ENCODE measurements at regions of chr7 and their contacts with region 1.

Region 1: GRCh38 chr7:98420966-98421612 is 20.2 kb upstream of the BAIAP2L1 start:
- DNase-seq: peak; percentile 87
- H3K4me3 ChIP-seq: peak overlapping the region in 1 of 2 experiments; percentile 45; a peak in 1 of 4 replicates
- H3K27ac ChIP-seq: no peak overlapping the region
- H3K4me1 ChIP-seq: peaks cover 3 to 6% of the 10 kb centered on the region in 2 experiments; a peak in 2 of 4 replicates
- H3K27me3 ChIP-seq: no peaks in the 10 kb centered on the region
- CTCF ChIP-seq: peak; percentile 100
- EP300 ChIP-seq: no peak
- RAD21 ChIP-seq: peak; percentile 81

Region 2: DNA sequence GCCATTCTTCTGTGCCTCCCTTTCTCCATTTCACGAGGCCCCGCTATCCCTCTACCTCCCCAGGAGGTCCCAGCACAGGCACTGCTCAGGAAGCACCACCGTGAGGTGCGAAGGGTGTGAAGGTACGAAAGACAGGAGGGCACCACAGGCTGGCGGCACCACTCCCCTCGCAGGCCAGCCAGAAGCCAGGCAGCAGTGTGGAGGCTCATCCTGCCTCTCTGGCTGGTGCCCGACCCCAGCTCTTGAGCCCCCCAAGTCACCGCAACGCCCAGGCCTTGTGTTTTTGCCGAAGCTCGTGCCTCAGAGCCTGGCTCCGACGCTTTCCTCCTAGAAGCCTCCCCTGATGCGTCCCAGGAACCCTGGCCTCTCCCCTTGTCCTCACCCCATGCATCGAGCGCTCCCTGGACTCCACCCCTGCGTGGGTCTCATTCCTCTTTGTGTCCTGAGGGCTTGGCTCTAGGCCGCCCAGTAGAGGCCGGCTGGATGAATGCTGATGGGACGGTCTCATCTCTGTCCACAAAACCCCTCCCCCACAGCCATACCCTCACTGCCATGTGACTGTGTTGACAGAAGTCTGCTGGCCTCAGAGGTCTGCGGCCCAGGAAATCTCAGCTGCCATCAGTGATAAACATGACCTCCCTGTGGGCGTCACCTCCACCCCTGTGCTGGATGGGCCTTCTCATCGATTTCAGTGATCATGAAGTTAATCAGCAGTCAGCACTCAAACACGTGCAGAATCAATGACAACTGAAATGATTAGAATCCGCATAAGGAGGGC is 120.3 kb before region 1 on chr7:
- CTCF ChIA-PET with region 1: interaction called, 17 read pairs
- POLR2A ChIA-PET with region 1: interaction called, 3 read pairs
- DNase-seq: peak; percentile 51
- H3K4me3 ChIP-seq: no peak overlapping the region
- H3K27ac ChIP-seq: no peak overlapping the region
- H3K4me1 ChIP-seq: peaks cover 0 to 1% of the 10 kb centered on the region in 2 experiments; a peak in 1 of 4 replicates
- H3K27me3 ChIP-seq: no peaks in the 10 kb centered on the region
- CTCF ChIP-seq: no peak
- EP300 ChIP-seq: no peak
- RAD21 ChIP-seq: no peak

Region 3: GRCh38 chr7:98341106-98341505 is 80.0 kb before region 1 on chr7:
- CTCF ChIA-PET with region 1: no interaction called
- POLR2A ChIA-PET with region 1: no interaction called
- DNase-seq: no peak
- H3K4me3 ChIP-seq: no peak overlapping the region
- H3K27ac ChIP-seq: no peak overlapping the region
- H3K4me1 ChIP-seq: peaks cover 0 to 5% of the 10 kb centered on the region in 2 experiments; a peak in 1 of 4 replicates
- H3K27me3 ChIP-seq: no peaks in the 10 kb centered on the region
- CTCF ChIP-seq: no peak
- EP300 ChIP-seq: no peak
- RAD21 ChIP-seq: no peak

Region 4: DNA sequence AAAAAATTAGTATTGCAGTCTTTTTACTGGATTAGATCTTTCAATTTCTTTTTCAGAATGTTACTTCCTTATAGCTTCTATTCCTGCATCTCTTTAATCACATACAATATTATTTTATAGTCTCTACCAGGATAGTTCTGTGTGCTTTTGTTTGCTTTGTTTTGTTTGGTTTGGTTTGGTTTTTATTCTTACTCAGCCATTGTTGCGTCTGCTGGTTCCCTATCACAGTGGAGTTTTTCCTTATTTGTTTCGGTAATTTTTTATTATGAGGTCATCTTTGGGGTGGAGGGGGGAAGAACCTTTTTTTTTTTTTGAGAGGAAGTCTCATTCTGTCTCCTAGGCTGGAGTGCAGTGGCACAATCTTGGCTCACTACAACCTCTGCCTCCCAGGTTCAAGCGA is 11.2 kb before region 1 on chr7:
- CTCF ChIA-PET with region 1: interaction called, 124 read pairs
- POLR2A ChIA-PET with region 1: no interaction called
- DNase-seq: no peak
- H3K4me3 ChIP-seq: no peak overlapping the region
- H3K27ac ChIP-seq: no peak overlapping the region
- H3K4me1 ChIP-seq: no peaks in the 10 kb centered on the region
- H3K27me3 ChIP-seq: no peaks in the 10 kb centered on the region
- CTCF ChIP-seq: no peak
- EP300 ChIP-seq: no peak
- RAD21 ChIP-seq: no peak

Region 5: GRCh38 chr7:98555403-98555802 is 134.3 kb after region 1 on chr7:
- CTCF ChIA-PET with region 1: interaction called, 11 read pairs
- POLR2A ChIA-PET with region 1: no interaction called
- DNase-seq: no peak
- H3K4me3 ChIP-seq: no peak overlapping the region
- H3K27ac ChIP-seq: peak overlapping the region in 1 of 2 experiments; percentile 81; a peak in 2 of 4 replicates
- H3K4me1 ChIP-seq: peaks cover 0 to 37% of the 10 kb centered on the region in 2 experiments; a peak in 1 of 4 replicates
- H3K27me3 ChIP-seq: no peaks in the 10 kb centered on the region
- CTCF ChIP-seq: no peak
- EP300 ChIP-seq: no peak
- RAD21 ChIP-seq: no peak

Region 6: DNA sequence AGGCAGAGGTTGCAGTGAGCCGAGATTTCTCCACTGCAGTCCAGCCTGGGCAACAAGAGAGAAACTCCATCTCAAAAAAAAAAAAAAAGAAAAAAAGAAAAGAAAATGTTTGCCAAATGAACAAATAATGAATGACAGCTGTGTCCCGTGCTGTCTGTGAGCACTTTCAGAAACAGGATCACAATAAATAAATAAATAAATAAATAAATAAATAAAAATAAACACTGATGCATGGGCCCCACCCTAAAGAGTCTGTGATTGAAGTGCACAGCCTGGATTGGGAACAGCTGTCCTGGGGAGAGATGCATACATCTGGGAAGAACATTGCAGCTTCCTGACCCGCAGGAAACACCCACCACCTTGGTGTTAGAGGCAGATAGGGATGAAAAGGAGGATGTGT is 319.6 kb after region 1 on chr7:
- CTCF ChIA-PET with region 1: interaction called, 39 read pairs
- POLR2A ChIA-PET with region 1: no interaction called
- DNase-seq: no peak
- H3K4me3 ChIP-seq: no peak overlapping the region
- H3K27ac ChIP-seq: no peak overlapping the region
- H3K4me1 ChIP-seq: no peaks in the 10 kb centered on the region
- H3K27me3 ChIP-seq: no peaks in the 10 kb centered on the region
- CTCF ChIP-seq: no peak
- EP300 ChIP-seq: no peak
- RAD21 ChIP-seq: no peak

Region 7: GRCh38 chr7:98771519-98771918 is 350.4 kb after region 1 on chr7:
- CTCF ChIA-PET with region 1: interaction called, 15 read pairs
- POLR2A ChIA-PET with region 1: no interaction called
- DNase-seq: no peak
- H3K4me3 ChIP-seq: no peak overlapping the region
- H3K27ac ChIP-seq: no peak overlapping the region
- H3K4me1 ChIP-seq: peaks cover 0 to 3% of the 10 kb centered on the region in 2 experiments; a peak in 1 of 4 replicates
- H3K27me3 ChIP-seq: no peaks in the 10 kb centered on the region
- CTCF ChIP-seq: no peak
- EP300 ChIP-seq: no peak
- RAD21 ChIP-seq: no peak